ENCODE measurements at regions of chr18 and their contacts with region 1.

Region 1: GRCh38 chr18:9913526-9914333 is at the start of gene VAPA:
- DNase-seq: peak; percentile 97 to 98
- ATAC-seq: peak; percentile 97
- H3K4me3 ChIP-seq: peak within 1 kb of the TSS; percentile 67 to 98
- H3K27ac ChIP-seq: peak within 1 kb of the TSS; percentile 96 to 99
- H3K4me1 ChIP-seq: peaks cover 0 to 5% of the 10 kb centered on the region in 2 donors
- H3K27me3 ChIP-seq: no peaks in the 10 kb centered on the region
- total RNA-seq, gene VAPA: 176 to 221 TPM

Region 2: DNA sequence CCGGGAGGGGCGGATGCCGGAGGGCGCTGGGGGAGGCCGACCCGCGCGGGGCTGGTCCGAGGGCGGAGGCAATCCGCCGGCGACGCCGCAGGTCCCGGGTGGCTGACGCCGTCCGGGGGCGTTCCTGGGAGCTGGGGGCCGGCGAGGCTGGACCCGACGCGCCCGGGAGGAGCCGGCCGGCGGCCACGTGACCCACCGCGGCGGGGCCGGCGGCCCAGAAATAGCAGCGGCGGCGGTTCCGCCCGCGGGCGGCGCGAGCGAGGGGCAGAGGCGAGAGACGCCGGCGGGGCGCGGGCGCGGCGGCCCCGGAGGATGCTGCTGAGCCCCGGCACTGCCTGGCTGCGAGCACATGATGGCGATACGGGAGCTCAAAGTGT is 205.7 kb before region 1 on chr18 and contains the start of gene RAB31:
- intact Hi-C with region 1: loop called in 1 of 2 experiments (anchors 10 kb)
- DNase-seq: peak; percentile 93 to 96
- ATAC-seq: peak; percentile 94
- H3K4me3 ChIP-seq: peak within 1 kb of the TSS; percentile 80 to 94
- H3K27ac ChIP-seq: peak within 1 kb of the TSS; percentile 74 to 92
- H3K4me1 ChIP-seq: peaks cover 0 to 3% of the 10 kb centered on the region in 2 donors
- H3K27me3 ChIP-seq: no peaks in the 10 kb centered on the region
- total RNA-seq, gene RAB31: 107 to 145 TPM

Region 3: DNA sequence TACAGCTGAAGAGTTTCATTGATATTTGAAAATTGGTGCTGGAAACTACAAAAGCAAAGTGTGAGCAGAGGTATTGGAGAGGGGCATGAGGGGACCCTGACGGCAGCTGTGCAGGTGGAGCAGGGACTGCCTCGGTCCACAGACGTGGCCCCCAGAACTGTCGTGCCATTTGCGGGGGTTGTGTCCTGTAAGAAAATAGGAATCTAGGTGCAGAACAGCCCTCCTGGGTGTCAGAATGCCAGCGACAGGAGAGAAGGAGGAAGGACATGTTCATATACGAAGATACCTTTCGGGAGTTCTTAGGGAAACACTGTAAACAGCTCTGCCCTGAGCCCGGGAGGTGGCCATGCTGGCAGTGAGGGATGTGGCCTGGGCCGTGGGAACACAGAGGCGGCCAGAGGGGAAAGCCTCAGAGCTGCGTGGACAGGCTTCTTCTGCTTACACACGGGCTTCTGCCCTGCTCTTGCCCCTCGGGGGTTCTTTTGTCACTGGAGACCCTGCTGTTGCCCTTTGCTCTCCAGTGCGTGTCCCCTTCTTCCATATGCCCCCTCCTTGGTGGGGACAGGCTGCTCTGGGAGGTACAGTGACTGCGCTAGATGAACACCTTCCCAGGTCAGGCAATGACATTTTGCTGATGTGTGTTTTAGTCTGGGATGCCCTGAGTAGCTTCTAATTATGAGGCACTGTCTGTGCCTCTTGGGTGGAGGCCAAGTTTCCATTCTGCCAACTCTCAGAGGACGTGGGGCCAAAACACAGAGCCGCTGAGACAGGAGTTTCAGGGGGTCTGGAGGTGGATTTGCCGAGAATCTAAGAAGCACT is 109.8 kb before region 1 on chr18:
- intact Hi-C with region 1: loop called in 1 of 2 experiments (anchors 5 kb)
- DNase-seq: peak in 1 of 2 donors; percentile 64
- ATAC-seq: no peak
- H3K4me3 ChIP-seq: no peak overlapping the region
- H3K27ac ChIP-seq: peak overlapping the region in 1 of 2 donors; percentile 80
- H3K4me1 ChIP-seq: peaks cover 3 to 8% of the 10 kb centered on the region in 2 donors
- H3K27me3 ChIP-seq: no peaks in the 10 kb centered on the region

Region 4: GRCh38 chr18:9827641-9828505 is 85.9 kb before region 1 on chr18:
- intact Hi-C with region 1: loop called in 1 of 2 experiments (anchors 5 kb)
- DNase-seq: peak in 1 of 2 donors; percentile 78
- ATAC-seq: no peak
- H3K4me3 ChIP-seq: no peak overlapping the region
- H3K27ac ChIP-seq: no peak overlapping the region
- H3K4me1 ChIP-seq: peaks cover 4 to 14% of the 10 kb centered on the region in 2 donors
- H3K27me3 ChIP-seq: no peaks in the 10 kb centered on the region

Region 5: GRCh38 chr18:9951022-9951859 is 37.5 kb after region 1 on chr18:
- intact Hi-C with region 1: loop called in 1 of 2 experiments (anchors 5 kb)
- DNase-seq: no peak
- ATAC-seq: peak; percentile 78
- H3K4me3 ChIP-seq: no peak overlapping the region
- H3K27ac ChIP-seq: no peak overlapping the region
- H3K4me1 ChIP-seq: no peaks in the 10 kb centered on the region
- H3K27me3 ChIP-seq: no peaks in the 10 kb centered on the region

Region 6: DNA sequence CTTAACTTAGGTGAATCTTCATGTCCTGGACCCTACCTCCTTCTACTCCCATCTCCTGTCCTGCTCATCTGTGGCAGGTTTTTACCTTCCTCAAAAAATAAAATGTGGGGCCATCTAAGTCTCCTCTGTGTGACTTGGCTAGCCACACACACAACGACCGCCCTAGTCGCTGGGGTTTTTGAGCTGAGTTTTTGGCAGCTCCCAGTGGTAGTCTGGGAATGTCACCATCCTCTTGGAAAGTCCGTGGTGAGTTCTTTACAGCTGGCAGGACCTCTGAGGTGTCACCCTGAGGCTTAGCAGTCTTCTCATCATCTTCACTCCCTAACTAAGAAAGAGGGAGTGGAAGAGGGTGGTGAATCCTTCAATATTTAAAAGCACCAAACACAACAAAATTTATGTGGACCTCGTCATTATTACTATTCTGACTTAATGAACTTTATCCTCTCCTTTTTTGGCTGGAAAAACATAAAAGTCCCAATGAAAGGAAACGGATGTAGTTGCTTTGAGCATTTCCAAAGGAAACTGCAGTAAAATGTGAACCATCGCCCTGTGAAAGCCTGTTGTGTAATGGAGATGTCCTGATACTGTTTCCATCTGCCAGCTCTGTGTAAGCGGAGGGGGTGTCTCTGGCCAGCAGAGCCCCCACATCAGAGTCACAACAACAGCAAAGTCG is 78.7 kb after region 1 on chr18:
- intact Hi-C with region 1: no loop called
- DNase-seq: no peak
- ATAC-seq: no peak
- H3K4me3 ChIP-seq: no peak overlapping the region
- H3K27ac ChIP-seq: no peak overlapping the region
- H3K4me1 ChIP-seq: no peaks in the 10 kb centered on the region
- H3K27me3 ChIP-seq: no peaks in the 10 kb centered on the region